Calu3 (cell line): ENCODE measurements at regions of chr2 and their contacts with region 1.

Region 1: DNA sequence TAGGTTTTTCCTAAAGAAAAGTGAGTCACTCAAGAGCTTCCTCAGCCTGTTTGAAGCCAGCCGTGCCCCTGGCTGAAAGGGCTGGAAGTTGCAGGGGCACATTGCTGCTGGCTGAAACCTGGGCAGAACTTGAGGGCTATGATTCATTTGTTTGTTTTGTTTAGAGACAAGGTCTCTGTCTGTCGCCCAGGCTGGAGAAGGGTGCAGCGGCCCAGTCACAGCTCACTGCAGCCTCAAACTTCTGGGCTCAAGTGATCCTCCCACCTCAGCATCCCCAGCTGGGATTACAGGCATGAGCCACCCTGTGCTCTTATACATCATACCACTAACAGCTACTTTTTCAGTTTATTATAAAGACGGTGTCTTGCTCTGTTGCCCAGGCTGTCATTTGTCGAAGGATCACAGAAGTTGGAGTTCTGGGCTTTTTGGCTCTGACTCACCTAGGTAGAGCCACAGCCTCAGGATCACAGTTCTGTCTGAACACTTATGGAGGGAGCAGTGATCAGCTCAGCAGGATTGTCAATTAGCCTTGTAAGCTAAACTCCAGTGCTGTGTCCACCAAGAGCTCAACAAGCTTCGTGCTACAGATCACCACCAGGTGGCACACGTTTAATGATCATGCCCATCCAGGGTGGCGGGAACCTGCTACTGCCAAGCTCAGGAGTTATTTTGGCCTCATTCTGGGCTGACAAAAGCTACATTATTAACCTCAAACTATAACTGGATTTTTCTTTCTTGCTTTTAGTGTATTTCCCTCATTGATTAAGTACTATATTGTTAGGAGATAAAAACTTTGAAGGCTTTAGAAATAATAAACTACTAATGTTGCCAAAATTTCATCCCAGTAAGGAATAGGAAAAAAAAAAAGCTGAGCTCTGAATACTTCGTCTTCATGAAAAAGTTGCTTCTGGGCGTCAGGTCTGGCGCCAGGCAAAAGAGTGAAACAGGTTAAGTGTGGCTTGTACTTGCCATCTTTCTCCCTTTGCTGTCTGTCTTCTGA is 57.9 kb downstream of the ARHGEF33 start:
- DNase-seq: peak; percentile 85
- H3K4me3 Mint-ChIP-seq: no peak overlapping the region
- H3K27ac Mint-ChIP-seq: no peak overlapping the region
- H3K4me1 Mint-ChIP-seq: peaks cover 7% of the 10 kb centered on the region
- H3K27me3 Mint-ChIP-seq: no peaks in the 10 kb centered on the region
- CTCF ChIP-seq: peak; percentile 62

Region 2: GRCh38 chr2:38892819-38893218 is 54.7 kb before region 1 on chr2:
- CTCF ChIA-PET with region 1: no interaction called
- intact Hi-C with region 1: no loop called
- DNase-seq: no peak
- H3K4me3 Mint-ChIP-seq: no peak overlapping the region
- H3K27ac Mint-ChIP-seq: no peak overlapping the region
- H3K4me1 Mint-ChIP-seq: no peaks in the 10 kb centered on the region
- H3K27me3 Mint-ChIP-seq: no peaks in the 10 kb centered on the region
- CTCF ChIP-seq: no peak

Region 3: DNA sequence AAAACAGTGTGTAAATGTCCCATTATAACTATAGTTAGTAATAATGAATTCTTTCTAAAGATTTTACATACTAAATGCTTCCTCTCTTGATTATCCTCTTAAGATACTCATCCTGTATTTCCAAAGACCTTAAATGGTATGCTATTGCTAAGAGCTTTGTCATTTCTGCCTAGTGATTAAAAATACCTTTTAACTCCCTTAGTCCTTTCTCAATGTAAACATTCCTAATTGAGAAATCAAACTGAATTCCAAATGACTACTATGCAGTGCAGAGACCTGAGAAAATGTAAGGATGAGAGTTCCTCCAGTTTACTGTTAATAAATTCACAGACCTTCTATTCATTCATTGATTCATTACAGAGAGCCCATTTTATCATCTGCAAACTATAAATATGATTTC is 86.4 kb after region 1 on chr2:
- CTCF ChIA-PET with region 1: interaction called, 11 read pairs
- intact Hi-C with region 1: no loop called
- DNase-seq: no peak
- H3K4me3 Mint-ChIP-seq: no peak overlapping the region
- H3K27ac Mint-ChIP-seq: no peak overlapping the region
- H3K4me1 Mint-ChIP-seq: no peaks in the 10 kb centered on the region
- H3K27me3 Mint-ChIP-seq: no peaks in the 10 kb centered on the region
- CTCF ChIP-seq: no peak

Region 4: DNA sequence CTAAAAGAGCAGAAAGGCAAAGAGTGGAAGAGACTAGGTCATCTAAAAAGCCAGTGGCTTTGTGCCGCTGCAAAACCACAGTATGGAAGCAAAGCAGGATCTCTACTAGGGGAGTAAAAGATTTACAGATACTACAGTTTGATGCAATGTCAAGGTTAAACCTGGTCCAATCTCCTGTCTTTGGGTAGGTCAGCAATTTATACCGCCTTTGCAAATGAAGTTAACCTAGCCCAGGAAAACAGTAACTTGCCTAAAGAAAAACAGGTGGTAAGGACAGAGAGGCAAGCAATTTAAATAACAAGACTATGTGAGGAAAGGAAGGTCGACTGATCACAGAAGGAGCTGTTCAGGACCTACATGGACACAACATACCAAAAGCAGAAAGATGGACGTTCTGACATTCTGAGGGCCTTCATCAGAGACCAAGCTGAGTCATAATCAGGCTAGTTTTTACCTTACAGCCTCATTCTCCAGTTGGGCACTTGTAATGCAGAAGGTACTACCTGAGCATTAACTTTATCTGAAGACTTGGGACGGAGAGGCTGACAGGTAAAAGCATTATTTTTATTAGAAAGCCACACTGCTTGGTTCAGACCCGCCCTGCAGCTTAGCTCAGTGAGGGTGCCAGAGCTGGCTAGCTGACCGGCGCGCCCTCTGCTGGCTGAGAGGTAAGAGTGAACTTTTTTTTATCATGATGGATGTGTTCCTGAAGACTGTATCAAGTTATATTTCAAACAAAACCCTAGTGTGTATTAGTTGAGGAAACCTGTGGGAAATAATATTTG is 280.3 kb after region 1 on chr2:
- CTCF ChIA-PET with region 1: interaction called, 54 read pairs
- intact Hi-C with region 1: loop called (anchors 1 kb)
- DNase-seq: peak; percentile 76
- H3K4me3 Mint-ChIP-seq: no peak overlapping the region
- H3K27ac Mint-ChIP-seq: no peak overlapping the region
- H3K4me1 Mint-ChIP-seq: no peaks in the 10 kb centered on the region
- H3K27me3 Mint-ChIP-seq: no peaks in the 10 kb centered on the region
- CTCF ChIP-seq: peak; percentile 61